ENCODE measurements at regions of chr14 and their contacts with region 1.

Region 1: GRCh38 chr14:21476925-21477681 is at the starts of genes RAB2B and TOX4:
- DNase-seq: peak; percentile 97
- H3K4me3 ChIP-seq: peak within 1 kb of the TSS; percentile 76 to 92 (median 77)
- H3K27ac ChIP-seq: peak within 1 kb of the TSS; percentile 83
- H3K4me1 ChIP-seq: peaks cover 5% of the 10 kb centered on the region
- H3K27me3 ChIP-seq: no peaks in the 10 kb centered on the region
- CTCF ChIP-seq: peak; percentile 89 to 100
- total RNA-seq, gene RAB2B: 17.6 to 21.8 TPM
- total RNA-seq, gene TOX4: 37.7 to 75.8 TPM

Region 2: DNA sequence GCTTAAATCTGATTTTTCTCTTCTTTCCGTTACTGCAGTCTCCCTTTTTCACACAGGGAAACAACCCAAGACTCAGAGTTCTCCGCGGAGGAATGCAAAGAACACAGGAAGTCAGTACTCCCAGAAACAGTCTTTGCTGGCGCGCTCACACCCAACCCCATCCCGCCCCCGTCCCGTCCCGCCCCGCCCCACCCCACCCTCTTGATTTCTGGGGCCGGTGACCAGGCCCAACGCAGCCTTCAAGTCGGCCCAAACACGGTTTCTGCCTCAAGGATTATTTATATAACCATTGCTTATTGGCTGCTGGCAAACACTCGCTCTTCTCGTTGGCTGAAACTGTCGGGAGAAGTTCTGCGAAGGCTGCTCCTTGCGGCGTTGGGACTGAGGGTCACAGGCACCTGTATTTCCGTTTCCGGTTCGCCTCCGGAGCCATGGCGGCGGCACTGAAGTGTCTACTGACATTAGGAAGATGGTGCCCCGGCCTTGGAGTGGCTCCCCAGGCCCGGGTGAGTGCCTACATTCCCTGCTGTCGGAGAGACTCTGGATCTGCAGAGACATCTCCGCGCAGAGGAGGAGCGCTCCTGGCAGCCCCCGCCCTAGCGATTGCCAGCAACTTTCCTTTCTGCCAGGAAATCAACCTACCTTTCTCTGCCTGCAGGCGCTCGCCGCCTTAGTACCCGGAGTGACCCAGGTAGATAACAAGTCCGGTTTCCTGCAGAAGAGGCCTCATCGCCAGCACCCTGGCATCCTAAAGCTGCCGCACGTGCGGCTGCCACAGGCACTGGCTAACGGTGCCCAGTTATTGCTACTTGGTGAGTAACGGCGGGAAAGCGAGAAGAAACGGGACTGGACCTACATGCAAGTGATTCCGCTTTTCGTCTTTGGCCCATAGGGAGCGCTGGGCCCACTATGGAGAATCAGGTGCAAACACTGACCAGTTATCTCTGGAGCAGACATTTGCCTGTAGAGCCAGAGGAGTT is 487.2 kb before region 1 on chr14 and contains the start of gene METTL17:
- CTCF ChIA-PET with region 1: no interaction called
- dilution Hi-C with region 1: no loop called
- in situ Hi-C with region 1: no loop called
- intact Hi-C with region 1: no loop called
- DNase-seq: peak; percentile 97
- H3K4me3 ChIP-seq: peak within 1 kb of the TSS; percentile 88 to 99 (median 96)
- H3K27ac ChIP-seq: peak within 1 kb of the TSS; percentile 86
- H3K4me1 ChIP-seq: peaks cover 34% of the 10 kb centered on the region
- H3K27me3 ChIP-seq: no peaks in the 10 kb centered on the region
- CTCF ChIP-seq: peak; percentile 33 to 53
- total RNA-seq, gene METTL17: 44.6 to 47.8 TPM

Region 3: DNA sequence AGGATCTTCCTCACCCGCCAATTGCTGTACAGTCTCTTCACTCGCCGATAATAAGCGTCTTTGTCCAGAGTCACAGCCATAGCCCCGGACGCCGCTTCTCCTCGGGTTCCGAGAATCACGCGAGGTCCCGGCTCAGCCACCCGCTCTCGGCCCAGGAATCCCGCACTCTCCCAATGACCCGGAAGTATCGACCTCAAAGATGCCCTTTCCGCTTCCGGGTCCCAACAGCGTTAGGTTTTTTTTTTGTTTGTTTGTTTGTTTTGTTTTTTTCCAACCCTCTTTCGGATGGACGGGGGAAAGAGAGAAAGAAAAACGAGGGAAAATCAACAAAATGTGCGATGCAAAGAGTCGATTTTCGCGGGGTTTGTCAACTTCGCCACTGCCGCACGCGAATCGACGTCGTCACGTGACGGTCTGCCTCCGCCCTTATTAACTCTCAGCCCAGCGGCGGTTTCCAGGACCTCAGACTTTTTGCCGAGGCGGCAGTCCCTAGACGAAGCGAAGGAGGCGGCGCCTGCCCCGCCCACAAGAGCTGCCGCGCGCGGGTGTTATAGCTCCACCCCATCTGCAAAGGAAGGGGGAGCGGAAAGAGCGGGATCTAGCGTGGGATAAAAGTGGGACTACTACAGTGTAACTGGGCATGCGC is 93.1 kb before region 1 on chr14 and contains the start of gene SUPT16H:
- CTCF ChIA-PET with region 1: no interaction called
- dilution Hi-C with region 1: no loop called
- in situ Hi-C with region 1: no loop called
- intact Hi-C with region 1: loop called (anchors 5 kb)
- DNase-seq: peak; percentile 91
- H3K4me3 ChIP-seq: peak within 1 kb of the TSS; percentile 78 to 96 (median 79)
- H3K27ac ChIP-seq: peak within 1 kb of the TSS; percentile 96
- H3K4me1 ChIP-seq: peaks cover 8% of the 10 kb centered on the region
- H3K27me3 ChIP-seq: no peaks in the 10 kb centered on the region
- CTCF ChIP-seq: no peak
- total RNA-seq, gene SUPT16H: 58.3 to 87.2 TPM

Region 4: GRCh38 chr14:21437063-21437901 is 39.8 kb before region 1 on chr14:
- CTCF ChIA-PET with region 1: no interaction called
- dilution Hi-C with region 1: no loop called
- in situ Hi-C with region 1: no loop called
- intact Hi-C with region 1: loop called (anchors 1 kb)
- DNase-seq: peak; percentile 98
- H3K4me3 ChIP-seq: peak overlapping the region; percentile 80 to 91 (median 84)
- H3K27ac ChIP-seq: peak overlapping the region; percentile 80
- H3K4me1 ChIP-seq: peaks cover 12% of the 10 kb centered on the region
- H3K27me3 ChIP-seq: no peaks in the 10 kb centered on the region
- CTCF ChIP-seq: no peak

Region 5: DNA sequence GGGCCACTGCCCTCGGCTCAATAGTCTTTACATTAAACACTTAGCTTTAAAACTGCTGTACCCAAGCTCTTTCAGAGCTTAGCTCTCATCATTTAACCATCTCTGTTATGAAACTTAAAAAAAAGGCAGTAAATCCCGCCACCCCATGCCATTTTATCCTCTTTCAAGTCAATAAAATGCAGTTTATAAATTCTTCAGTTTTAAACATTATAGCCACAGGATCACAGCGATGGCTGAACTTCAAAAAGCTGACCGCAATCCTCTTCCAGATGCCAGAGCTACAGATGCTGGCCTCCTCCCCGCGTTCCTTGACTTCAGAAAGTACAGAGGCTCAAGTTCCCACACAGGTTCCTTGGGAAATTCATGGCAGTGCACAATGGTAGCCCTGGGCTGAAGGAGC is 98.6 kb after region 1 on chr14:
- CTCF ChIA-PET with region 1: no interaction called
- dilution Hi-C with region 1: no loop called
- in situ Hi-C with region 1: no loop called
- intact Hi-C with region 1: no loop called
- DNase-seq: no peak
- H3K4me3 ChIP-seq: no peak overlapping the region
- H3K27ac ChIP-seq: no peak overlapping the region
- H3K4me1 ChIP-seq: no peaks in the 10 kb centered on the region
- H3K27me3 ChIP-seq: peaks cover 2% of the 10 kb centered on the region
- CTCF ChIP-seq: no peak